ENCODE measurements at regions of chr4 and their contacts with region 1.

Region 1: GRCh38 chr4:182806259-182807252 is 110.6 kb downstream of the DCTD start:
- DNase-seq: peak; percentile 76
- H3K4me3 Mint-ChIP-seq: peak overlapping the region; percentile 69
- H3K27ac Mint-ChIP-seq: no peak overlapping the region
- H3K4me1 Mint-ChIP-seq: no peaks in the 10 kb centered on the region
- H3K27me3 Mint-ChIP-seq: no peaks in the 10 kb centered on the region
- CTCF ChIP-seq: peak; percentile 87

Region 2: GRCh38 chr4:181569553-181569952 is 1237.0 kb before region 1 on chr4:
- CTCF ChIA-PET with region 1: no interaction called
- intact Hi-C with region 1: loop called (anchors 10 kb)
- DNase-seq: no peak
- H3K4me3 Mint-ChIP-seq: no peak overlapping the region
- H3K27ac Mint-ChIP-seq: no peak overlapping the region
- H3K4me1 Mint-ChIP-seq: peaks cover 9% of the 10 kb centered on the region
- H3K27me3 Mint-ChIP-seq: no peaks in the 10 kb centered on the region
- CTCF ChIP-seq: no peak

Region 3: GRCh38 chr4:182089326-182089725 is 717.2 kb before region 1 on chr4:
- CTCF ChIA-PET with region 1: no interaction called
- intact Hi-C with region 1: loop called (anchors 10 kb)
- DNase-seq: peak; percentile 45
- H3K4me3 Mint-ChIP-seq: no peak overlapping the region
- H3K27ac Mint-ChIP-seq: no peak overlapping the region
- H3K4me1 Mint-ChIP-seq: no peaks in the 10 kb centered on the region
- H3K27me3 Mint-ChIP-seq: no peaks in the 10 kb centered on the region
- CTCF ChIP-seq: peak; percentile 30

Region 4: GRCh38 chr4:182478475-182478874 is 328.1 kb before region 1 on chr4:
- CTCF ChIA-PET with region 1: no interaction called
- intact Hi-C with region 1: loop called (anchors 1 kb)
- DNase-seq: no peak
- H3K4me3 Mint-ChIP-seq: no peak overlapping the region
- H3K27ac Mint-ChIP-seq: no peak overlapping the region
- H3K4me1 Mint-ChIP-seq: no peaks in the 10 kb centered on the region
- H3K27me3 Mint-ChIP-seq: no peaks in the 10 kb centered on the region
- CTCF ChIP-seq: peak; percentile 35